Activated T-helper 1 cell treated with anti-CD3 and anti-CD28 coated beads, Interleukin-12 subunit alpha, Interleukin-12 subunit beta, Interleukin-2, Interleukin-4 antibody, amounts not matched to agents 30 ng/mL and 10 ng/mL and 1 ng/mL, durations not matched to agents 14 hours and 24 hours and 36 hours (primary cell): ENCODE measurements at regions of chr5 and their contacts with region 1.

Region 1: DNA sequence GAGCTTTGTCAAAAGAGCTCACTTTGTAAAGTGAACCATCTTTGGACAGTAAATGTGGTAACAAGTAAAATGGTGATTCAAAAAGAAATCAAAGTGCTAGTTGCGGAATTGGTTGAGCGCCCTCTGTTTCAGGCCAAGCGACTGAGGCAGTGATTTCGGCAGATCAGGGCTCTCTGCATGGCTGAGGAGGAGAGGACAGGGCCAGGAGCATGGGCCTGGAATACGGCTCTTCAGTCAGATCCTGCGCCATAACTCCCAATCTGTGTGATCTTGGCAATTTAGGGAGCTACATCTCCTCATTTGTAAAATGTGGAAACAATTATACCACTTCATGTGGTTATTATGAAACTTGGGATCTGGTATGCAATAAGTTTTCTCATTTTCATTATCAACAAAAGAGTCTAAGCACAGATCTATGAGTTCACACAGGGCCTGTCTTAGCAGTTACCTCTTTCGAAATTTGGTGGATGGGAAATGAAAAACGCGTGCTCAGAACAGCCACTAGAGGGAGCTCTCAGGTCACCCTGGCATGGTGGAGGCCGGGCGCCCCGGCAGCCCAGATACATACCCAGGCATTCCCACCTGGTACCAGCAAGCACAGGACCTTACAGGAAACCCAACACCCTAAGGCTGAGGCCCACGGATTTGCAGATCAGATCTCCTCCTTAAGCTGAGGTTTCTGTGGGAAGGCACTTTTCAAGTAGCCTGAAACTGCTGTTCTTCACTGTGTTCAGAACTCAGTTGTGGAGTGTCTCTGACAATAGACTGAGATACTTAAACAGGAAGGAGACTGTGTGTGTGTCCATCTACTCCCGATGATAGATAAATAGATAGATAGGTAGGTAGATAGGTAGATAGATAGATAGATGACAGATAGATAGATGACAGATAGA is 303.7 kb downstream of the RAB3C start:
- DNase-seq: peak; percentile 58
- H3K4me3 Mint-ChIP-seq: peak overlapping the region; percentile 49
- H3K27ac Mint-ChIP-seq: peak overlapping the region; percentile 87
- H3K4me1 Mint-ChIP-seq: peaks cover 40% of the 10 kb centered on the region
- H3K27me3 Mint-ChIP-seq: peaks cover 9% of the 10 kb centered on the region

Region 2: GRCh38 chr5:58731641-58732040 is 154.9 kb before region 1 on chr5:
- intact Hi-C with region 1: no loop called
- DNase-seq: no peak
- H3K4me3 Mint-ChIP-seq: no peak overlapping the region
- H3K27ac Mint-ChIP-seq: no peak overlapping the region
- H3K4me1 Mint-ChIP-seq: no peaks in the 10 kb centered on the region
- H3K27me3 Mint-ChIP-seq: no peaks in the 10 kb centered on the region

Region 3: DNA sequence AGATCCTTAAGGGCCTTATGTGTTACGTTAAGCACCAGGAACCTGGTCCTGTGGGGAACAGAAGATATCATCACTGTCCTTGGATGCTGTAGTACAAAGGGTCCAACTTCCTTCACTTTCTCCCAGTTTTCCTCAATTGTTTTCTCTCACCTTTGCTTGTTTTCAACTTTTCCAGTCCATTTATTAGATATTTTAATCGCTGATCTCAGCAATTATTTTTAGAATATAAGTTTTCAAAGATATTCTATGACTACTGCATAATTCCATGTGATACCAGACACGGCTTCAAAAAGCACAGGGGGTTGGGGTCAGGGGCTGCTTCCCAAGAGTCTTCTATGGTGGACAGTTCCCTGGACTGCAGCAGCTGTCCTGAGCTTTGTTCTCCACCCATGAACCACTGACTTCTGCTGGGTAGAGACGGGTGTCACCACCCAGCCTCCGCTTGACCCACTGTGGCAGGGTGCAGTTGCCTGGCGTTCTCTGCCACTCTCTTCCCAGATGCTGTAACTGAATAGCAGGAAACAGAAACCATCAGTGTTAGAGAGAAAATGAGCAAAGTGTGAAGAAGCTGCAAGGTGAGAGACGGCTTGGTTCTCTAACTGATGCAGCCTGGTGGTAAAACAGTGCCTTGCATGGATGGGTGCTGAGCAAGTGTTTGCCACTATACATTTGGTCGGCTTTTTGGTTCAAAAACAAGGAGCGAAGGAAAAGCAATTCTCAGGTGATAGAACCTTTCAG is 79.3 kb after region 1 on chr5:
- intact Hi-C with region 1: loop called (anchors 1 kb)
- DNase-seq: no peak
- H3K4me3 Mint-ChIP-seq: no peak overlapping the region
- H3K27ac Mint-ChIP-seq: no peak overlapping the region
- H3K4me1 Mint-ChIP-seq: peaks cover 20% of the 10 kb centered on the region
- H3K27me3 Mint-ChIP-seq: peaks cover 2% of the 10 kb centered on the region

Region 4: GRCh38 chr5:59039296-59040023 is 152.9 kb after region 1 on chr5:
- intact Hi-C with region 1: loop called (anchors 1 kb)
- DNase-seq: peak; percentile 88
- H3K4me3 Mint-ChIP-seq: peak overlapping the region; percentile 89
- H3K27ac Mint-ChIP-seq: peak overlapping the region; percentile 99
- H3K4me1 Mint-ChIP-seq: peaks cover 56% of the 10 kb centered on the region
- H3K27me3 Mint-ChIP-seq: no peaks in the 10 kb centered on the region

Region 5: GRCh38 chr5:59174248-59174844 is 287.8 kb after region 1 on chr5:
- intact Hi-C with region 1: loop called (anchors 1 kb)
- DNase-seq: no peak
- H3K4me3 Mint-ChIP-seq: no peak overlapping the region
- H3K27ac Mint-ChIP-seq: no peak overlapping the region
- H3K4me1 Mint-ChIP-seq: peaks cover 53% of the 10 kb centered on the region
- H3K27me3 Mint-ChIP-seq: no peaks in the 10 kb centered on the region

Region 6: GRCh38 chr5:59380350-59380951 is 493.9 kb after region 1 on chr5:
- intact Hi-C with region 1: loop called (anchors 1 kb)
- DNase-seq: no peak
- H3K4me3 Mint-ChIP-seq: no peak overlapping the region
- H3K27ac Mint-ChIP-seq: no peak overlapping the region
- H3K4me1 Mint-ChIP-seq: peaks cover 4% of the 10 kb centered on the region
- H3K27me3 Mint-ChIP-seq: peaks cover 10% of the 10 kb centered on the region